Activated CD4-positive, alpha-beta T cell treated with anti-CD3 and anti-CD28 coated beads, Interleukin-2, amount 10 ng/mL, durations not matched to agents 24 days and 14 days (primary cell): ENCODE measurements at regions of chr5 and their contacts with region 1.

Region 1: GRCh38 chr5:40277161-40277906 is 402.4 kb upstream of the PTGER4 start:
- DNase-seq: peak; percentile 77
- H3K4me3 Mint-ChIP-seq: peak overlapping the region; percentile 72
- H3K27ac Mint-ChIP-seq: peak overlapping the region; percentile 96
- H3K4me1 Mint-ChIP-seq: peaks cover 43% of the 10 kb centered on the region
- H3K27me3 Mint-ChIP-seq: no peaks in the 10 kb centered on the region

Region 2: GRCh38 chr5:40240111-40240510 is 37.2 kb before region 1 on chr5:
- intact Hi-C with region 1: loop called (anchors 5 kb)
- DNase-seq: no peak
- H3K4me3 Mint-ChIP-seq: no peak overlapping the region
- H3K27ac Mint-ChIP-seq: no peak overlapping the region
- H3K4me1 Mint-ChIP-seq: peaks cover 9% of the 10 kb centered on the region
- H3K27me3 Mint-ChIP-seq: no peaks in the 10 kb centered on the region

Region 3: GRCh38 chr5:40307920-40308319 is 30.6 kb after region 1 on chr5:
- intact Hi-C with region 1: loop called (anchors 2 kb)
- DNase-seq: no peak
- H3K4me3 Mint-ChIP-seq: no peak overlapping the region
- H3K27ac Mint-ChIP-seq: no peak overlapping the region
- H3K4me1 Mint-ChIP-seq: peaks cover 9% of the 10 kb centered on the region
- H3K27me3 Mint-ChIP-seq: no peaks in the 10 kb centered on the region

Region 4: DNA sequence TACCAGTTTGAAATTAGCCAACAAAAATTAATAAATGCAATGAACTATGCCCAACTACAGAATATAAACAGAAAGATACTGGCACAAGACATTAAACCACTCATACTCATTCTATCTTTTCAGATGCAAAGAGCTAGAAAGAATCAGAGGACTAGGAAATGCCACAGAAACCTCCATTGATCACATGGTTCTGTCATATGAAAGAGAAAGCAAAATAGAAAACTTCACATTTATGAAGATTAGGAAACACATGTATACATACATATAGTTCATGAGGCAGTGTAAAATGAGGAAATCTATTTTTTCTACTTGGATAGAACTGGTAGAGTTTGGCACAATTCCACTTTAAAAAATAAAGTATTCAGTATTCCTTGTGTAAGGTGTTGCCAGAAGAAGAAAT is 127.3 kb after region 1 on chr5:
- intact Hi-C with region 1: loop called (anchors 1 kb)
- DNase-seq: peak; percentile 80
- H3K4me3 Mint-ChIP-seq: peak overlapping the region; percentile 21
- H3K27ac Mint-ChIP-seq: peak overlapping the region; percentile 75
- H3K4me1 Mint-ChIP-seq: peaks cover 71% of the 10 kb centered on the region
- H3K27me3 Mint-ChIP-seq: no peaks in the 10 kb centered on the region

Region 5: DNA sequence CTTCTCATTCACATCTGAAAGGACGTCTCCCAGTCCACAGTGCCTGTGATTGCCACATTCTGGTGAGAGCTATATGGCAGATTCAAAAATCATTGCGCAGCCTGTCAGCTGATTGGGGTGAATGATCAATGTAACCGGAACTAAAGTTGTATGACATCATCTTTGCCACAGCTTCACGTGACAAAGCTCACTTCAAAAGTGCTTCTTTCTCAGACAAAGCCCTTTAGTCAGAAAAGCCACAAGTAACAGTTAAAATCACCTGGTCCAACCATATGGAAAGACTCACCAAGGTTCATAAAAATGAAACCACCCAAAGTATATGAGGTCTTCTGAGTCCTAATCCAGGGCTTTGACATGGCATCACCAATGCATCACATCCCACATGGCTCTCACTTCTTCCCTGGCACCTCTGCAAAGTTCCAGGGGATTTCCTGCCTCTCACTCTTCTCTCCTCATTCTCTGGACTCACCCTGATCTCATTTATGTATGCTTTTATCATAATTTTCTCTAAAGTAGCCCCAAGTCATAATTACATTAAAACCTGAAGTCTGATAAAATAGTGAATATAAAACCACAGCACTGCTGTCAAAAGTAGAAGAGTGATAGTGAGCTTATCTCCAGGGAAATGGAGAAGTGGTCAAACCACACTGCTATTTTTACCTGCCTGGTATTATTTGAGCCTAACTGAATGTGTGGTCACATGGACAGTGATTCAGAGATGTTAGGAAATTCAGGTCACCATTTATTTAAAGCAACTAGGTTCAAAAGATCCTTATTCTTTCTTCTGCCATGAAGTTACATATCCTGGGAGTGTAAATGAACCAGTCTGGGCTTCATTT is 209.3 kb after region 1 on chr5:
- intact Hi-C with region 1: loop called (anchors 1 kb)
- DNase-seq: peak; percentile 89
- H3K4me3 Mint-ChIP-seq: peak overlapping the region; percentile 45
- H3K27ac Mint-ChIP-seq: peak overlapping the region; percentile 89
- H3K4me1 Mint-ChIP-seq: peaks cover 55% of the 10 kb centered on the region
- H3K27me3 Mint-ChIP-seq: no peaks in the 10 kb centered on the region